Activated naive CD4-positive, alpha-beta T cell treated with anti-CD3 and anti-CD28 coated beads for 36 hours (primary cell): ENCODE measurements at regions of chrX and their contacts with region 1.

Region 1: DNA sequence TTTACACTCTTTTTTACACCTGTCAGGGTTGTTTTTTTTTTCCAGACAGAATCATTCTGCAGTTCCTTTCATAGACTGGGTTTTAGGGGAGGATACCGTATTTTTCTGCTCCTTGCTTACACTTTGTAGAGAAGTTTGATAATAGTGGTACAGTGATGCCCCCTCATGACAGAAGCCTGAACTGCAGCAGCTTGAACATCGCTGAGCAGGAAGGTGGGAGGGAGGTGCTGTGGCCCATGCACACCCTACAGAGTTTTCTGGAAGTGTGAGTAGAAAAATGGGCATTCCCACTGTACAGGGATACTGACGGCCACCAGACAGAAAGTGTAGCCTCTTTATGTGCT is 54.5 kb downstream of the RAB40A start:
- DNase-seq: peak; percentile 87
- H3K4me3 Mint-ChIP-seq: peak overlapping the region; percentile 82
- H3K27ac Mint-ChIP-seq: peak overlapping the region; percentile 73
- H3K4me1 Mint-ChIP-seq: peaks cover 25% of the 10 kb centered on the region
- H3K27me3 Mint-ChIP-seq: no peaks in the 10 kb centered on the region

Region 2: DNA sequence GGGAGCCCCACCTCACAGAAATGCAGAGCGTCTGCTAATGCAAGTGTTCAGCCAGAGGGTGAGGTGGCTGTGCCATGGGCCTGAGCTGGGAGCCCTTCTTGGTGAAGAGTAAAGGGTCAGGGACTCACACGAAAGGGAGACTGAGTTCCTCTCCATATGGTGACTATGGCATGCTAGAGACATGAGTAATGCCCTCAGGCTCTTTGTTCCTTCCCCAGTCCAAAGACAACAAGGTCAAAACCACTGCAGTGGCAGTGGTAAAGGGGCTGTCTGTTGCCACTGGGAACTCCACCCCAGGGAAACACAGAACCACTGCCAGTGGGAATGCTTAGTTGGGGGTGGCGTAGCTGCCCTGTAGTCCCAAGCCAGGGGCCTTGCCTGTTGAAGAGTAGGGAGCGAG is 505.3 kb before region 1 on chrX:
- CTCF ChIA-PET with region 1: no interaction called
- intact Hi-C with region 1: no loop called
- DNase-seq: no peak
- H3K4me3 Mint-ChIP-seq: no peak overlapping the region
- H3K27ac Mint-ChIP-seq: no peak overlapping the region
- H3K4me1 Mint-ChIP-seq: no peaks in the 10 kb centered on the region
- H3K27me3 Mint-ChIP-seq: no peaks in the 10 kb centered on the region

Region 3: DNA sequence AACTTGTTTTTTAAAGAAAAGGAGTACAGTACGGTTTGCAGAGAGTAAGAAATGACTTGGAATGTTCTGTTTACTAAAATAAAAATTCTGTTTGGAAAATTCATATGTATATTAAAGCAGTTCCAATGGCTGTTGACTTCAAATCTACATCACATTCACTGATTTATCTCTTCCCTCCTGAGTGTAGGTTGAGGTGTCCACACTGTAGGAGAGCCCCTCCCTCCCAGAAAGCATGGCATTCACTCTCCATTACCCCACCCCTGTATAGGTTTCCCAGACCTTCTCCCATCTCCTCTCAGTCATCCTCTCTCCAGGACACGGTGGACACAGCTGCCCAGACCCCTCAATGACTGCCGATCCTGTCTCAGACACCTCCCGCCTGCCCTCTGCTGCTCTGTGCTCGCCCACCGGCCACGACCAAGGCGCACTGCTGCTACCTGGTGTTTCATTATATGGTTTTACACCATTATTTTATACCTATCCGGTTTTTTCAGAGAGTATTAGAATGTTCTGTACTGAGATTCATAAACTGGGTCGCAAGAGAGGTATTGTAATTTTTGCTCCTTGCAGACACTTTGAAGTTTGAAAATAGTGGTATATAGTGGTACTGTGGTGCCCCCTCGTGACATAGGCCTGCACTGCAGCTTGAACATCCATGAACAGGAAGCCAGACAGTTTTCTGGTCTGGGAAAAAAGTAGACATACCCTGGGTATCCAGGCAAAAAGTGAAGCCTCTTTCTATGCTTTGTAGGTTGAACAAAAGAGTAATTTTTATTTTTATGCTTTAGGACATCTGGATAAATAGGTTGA is 288.6 kb before region 1 on chrX:
- CTCF ChIA-PET with region 1: interaction called, 4 read pairs
- intact Hi-C with region 1: loop called (anchors 1 kb)
- DNase-seq: peak; percentile 75
- H3K4me3 Mint-ChIP-seq: peak overlapping the region; percentile 20
- H3K27ac Mint-ChIP-seq: no peak overlapping the region
- H3K4me1 Mint-ChIP-seq: peaks cover 3% of the 10 kb centered on the region
- H3K27me3 Mint-ChIP-seq: peaks cover 3% of the 10 kb centered on the region

Region 4: DNA sequence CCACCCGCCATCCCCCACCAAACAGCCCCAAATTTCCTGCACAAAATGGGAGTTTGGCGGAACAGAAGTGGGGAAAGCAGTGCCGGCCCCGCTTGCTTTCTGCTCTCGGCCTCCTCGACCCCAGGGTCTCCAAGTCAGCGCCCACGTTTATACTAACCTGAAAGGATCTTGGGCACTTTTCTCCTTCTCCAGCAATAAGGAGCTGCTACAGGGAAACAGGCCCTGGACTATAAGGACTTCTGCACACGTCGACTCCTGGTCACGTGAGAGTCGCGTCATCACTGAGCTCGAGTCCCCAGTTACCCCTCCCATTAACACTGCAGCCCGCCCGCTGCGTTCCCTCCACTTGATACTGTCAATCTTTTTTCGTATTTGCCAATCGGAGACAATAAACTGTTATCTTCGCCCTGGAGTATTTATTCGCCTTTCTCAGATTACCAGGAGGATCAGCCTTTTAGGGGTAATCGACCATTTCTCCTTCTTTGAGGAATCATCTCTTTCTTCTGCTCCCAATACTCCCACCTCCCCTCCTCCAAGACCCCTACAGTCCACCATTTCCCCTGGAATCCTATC is 209.7 kb before region 1 on chrX and contains the start of gene TCEAL8:
- CTCF ChIA-PET with region 1: interaction called, 3 read pairs
- intact Hi-C with region 1: loop called (anchors 1 kb)
- DNase-seq: peak; percentile 79
- H3K4me3 Mint-ChIP-seq: peak within 1 kb of the TSS; percentile 94
- H3K27ac Mint-ChIP-seq: peak within 1 kb of the TSS; percentile 96
- H3K4me1 Mint-ChIP-seq: peaks cover 14% of the 10 kb centered on the region
- H3K27me3 Mint-ChIP-seq: no peaks in the 10 kb centered on the region
- total RNA-seq, gene TCEAL8: 24.5 to 27.7 TPM

Region 5: DNA sequence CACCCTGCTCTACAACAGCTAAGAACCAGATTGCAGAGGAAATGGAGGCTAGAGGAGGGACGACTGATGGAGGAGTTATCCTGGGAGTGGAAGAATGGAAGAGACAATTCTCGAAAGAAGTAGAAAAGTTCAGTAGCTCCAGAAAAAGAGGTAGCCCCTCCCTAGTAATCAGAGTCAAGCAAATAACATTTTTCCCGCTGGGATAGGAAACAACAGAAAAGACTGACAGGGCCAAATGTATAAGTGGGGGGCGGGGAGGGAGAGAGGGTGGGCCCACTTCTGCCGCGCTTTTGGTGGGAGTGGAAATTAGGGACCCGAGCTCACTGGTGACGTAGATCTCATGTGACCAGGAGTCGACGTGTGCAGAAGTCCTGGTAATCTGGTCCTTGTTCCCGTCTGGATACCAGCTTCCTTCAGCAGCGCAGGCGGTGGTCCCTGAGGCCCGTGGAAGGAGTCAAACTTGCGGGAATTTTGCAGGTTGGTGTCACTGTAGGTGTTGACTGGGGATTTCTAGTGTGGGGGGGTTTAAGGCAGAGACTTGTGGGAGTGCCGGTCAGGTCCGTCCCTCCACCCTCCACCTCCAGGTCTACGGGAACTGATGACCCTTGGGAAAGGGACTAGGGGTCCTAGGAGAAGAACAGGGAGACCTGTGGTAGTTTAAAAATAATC is 108.5 kb before region 1 on chrX and contains the start of gene TCEAL9:
- CTCF ChIA-PET with region 1: no interaction called
- intact Hi-C with region 1: loop called (anchors 5 kb)
- DNase-seq: no peak
- H3K4me3 Mint-ChIP-seq: peak within 1 kb of the TSS; percentile 81
- H3K27ac Mint-ChIP-seq: no peak within 1 kb of the TSS
- H3K4me1 Mint-ChIP-seq: peaks cover 7% of the 10 kb centered on the region
- H3K27me3 Mint-ChIP-seq: no peaks in the 10 kb centered on the region
- total RNA-seq, gene TCEAL9: 3.2 to 3.5 TPM